Dorsolateral prefrontal cortex (tissue), 120 donors: ENCODE measurements at regions of chr18 and their contacts with region 1.

Region 1: DNA sequence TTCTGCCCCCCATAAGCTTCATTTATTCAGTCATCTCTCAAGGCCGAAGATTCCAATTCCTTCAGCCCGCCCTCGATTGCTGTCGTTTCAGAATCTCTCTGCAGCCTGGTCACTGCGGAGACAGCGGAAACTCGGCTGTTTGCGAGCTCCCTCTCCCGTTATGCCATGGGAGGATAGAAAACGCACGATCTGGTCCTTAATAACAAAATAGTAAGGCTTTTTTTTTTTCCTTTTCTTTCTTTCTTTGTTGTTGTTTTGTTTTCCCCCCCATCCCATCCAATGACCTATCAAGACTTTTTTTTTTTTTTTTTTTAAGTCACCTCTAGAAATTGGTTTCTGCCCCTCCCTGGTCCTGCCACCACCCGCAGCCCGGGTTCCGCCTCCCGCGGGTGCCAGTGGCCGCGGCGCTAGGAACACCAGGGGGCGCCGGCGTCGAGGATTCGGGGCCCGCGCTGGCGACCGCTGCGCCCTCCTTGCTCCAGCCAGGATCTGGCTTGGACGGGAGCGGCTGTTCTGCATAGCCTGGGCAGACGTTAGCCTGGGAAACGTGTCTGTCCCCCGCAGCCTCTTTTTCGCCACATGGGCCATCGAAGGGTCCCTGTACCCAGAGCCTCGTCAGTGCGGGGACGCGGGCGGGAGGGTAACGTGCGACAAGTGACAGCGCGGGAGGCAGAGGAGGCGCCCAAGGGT is 10.1 kb downstream of the CPLX4 start:
- DNase-seq: peak in 9 of 10 donors; percentile 26 to 84 (median 52)
- H3K4me3 ChIP-seq: peak overlapping the region in 51 of 59 donors; percentile 4 to 57 (median 38)
- H3K27ac ChIP-seq: no peak overlapping the region
- H3K27me3 ChIP-seq: peaks cover 0 to 65% (median 24%) of the 10 kb centered on the region in 45 donors
- CTCF ChIP-seq: peak in 55 of 56 donors; percentile 30 to 88 (median 73)

Region 2: GRCh38 chr18:58991167-58991798 is 317.1 kb before region 1 on chr18:
- intact Hi-C with region 1: no loop called
- DNase-seq: no peak
- H3K4me3 ChIP-seq: no peak overlapping the region
- H3K27ac ChIP-seq: peak overlapping the region in 19 of 59 donors; percentile 1 to 70 (median 37)
- H3K27me3 ChIP-seq: no peaks in the 10 kb centered on the region
- CTCF ChIP-seq: peak in 1 of 56 donors; percentile 10

Region 3: GRCh38 chr18:59374128-59374527 is 65.7 kb after region 1 on chr18:
- intact Hi-C with region 1: no loop called
- DNase-seq: no peak
- H3K4me3 ChIP-seq: no peak overlapping the region
- H3K27ac ChIP-seq: no peak overlapping the region
- H3K27me3 ChIP-seq: peaks cover 0 to 48% (median 6%) of the 10 kb centered on the region in 45 donors
- CTCF ChIP-seq: no peak

Region 4: GRCh38 chr18:59387687-59388565 is 79.5 kb after region 1 on chr18:
- intact Hi-C with region 1: loop called in 1 of 2 experiments (anchors 10 kb)
- DNase-seq: no peak
- H3K4me3 ChIP-seq: no peak overlapping the region
- H3K27ac ChIP-seq: no peak overlapping the region
- H3K27me3 ChIP-seq: peaks cover 0 to 5% (median 0%) of the 10 kb centered on the region in 45 donors
- CTCF ChIP-seq: no peak

Region 5: DNA sequence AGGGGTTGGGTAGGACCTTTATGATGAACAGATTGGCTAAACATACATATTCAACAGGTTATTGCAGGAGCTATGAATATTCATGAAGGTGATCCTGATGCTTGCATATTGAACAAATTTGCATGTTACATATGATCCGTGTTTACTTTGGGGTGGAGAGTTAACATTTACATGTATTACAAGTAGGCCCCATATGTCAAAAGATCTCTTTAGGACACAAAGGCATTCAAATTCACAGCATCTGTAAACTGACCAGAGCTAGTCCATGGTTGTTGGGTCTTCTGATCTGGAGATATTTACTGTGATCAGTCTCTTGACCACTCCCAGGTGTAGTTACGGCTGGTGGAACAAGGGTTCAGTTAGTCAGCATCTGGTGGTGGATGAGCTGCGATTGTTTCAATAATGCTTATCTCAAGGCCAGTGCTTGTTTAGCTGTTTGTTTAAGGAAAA is 671.8 kb after region 1 on chr18:
- intact Hi-C with region 1: no loop called
- DNase-seq: no peak
- H3K4me3 ChIP-seq: no peak overlapping the region
- H3K27ac ChIP-seq: no peak overlapping the region
- H3K27me3 ChIP-seq: no peaks in the 10 kb centered on the region
- CTCF ChIP-seq: no peak